ENCODE measurements at regions of chr1 and their contacts with region 1.

Region 1: GRCh38 chr1:183023601-183024316 is 539 bp downstream of the LAMC1 start:
- DNase-seq: peak; percentile 67
- ATAC-seq: peak; percentile 65
- H3K4me3 Mint-ChIP-seq: peak overlapping the region; percentile 94
- H3K27ac Mint-ChIP-seq: peak overlapping the region; percentile 86
- H3K4me1 Mint-ChIP-seq: peaks cover 48% of the 10 kb centered on the region
- H3K27me3 Mint-ChIP-seq: no peaks in the 10 kb centered on the region
- CTCF ChIP-seq: no peak

Region 2: DNA sequence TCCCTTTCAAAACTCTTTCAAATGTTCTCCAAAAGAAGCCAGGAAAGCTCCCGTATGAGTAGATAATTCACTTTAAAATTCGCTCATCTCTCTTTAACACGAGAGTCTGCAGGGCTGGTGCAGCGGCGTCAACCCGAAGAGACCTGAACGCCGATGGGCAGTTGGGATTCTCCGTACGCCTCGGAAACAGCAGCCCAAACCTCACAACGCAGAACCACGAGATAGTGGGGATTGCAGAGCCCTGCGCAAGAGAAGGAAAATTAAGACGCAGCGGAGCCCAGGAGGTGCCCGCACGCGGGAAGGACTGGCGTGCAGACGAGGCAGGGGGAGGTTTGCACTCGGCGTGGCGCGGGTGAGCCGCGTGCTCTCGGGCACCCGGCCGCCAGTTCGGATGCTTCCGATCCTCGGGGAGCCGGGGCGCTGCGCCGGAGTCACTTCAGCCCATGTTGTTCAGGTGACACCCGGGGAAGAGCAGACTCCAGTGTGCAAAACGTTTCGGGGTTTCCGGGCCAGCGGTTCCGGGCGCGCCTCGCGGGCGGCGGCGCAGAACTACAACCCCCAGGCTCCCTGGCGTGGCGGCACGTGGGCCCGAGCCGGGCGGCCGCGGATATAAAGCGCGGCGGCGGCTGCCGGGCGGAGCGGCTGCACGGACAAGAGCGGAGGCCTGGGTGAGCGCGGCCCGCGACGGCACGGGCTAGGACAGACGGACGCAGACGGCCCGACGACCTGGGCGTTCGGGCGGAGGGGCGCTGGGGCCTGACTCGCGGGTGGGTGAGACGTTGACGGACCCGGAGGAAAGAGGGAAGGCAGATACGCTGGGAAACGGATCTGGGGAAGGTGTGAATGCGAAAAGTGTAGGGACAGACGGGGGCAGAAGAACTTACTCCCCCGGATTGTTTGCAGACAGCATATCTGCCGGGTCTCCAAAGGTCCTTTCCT is 234.4 kb before region 1 on chr1 and contains the start of gene NPL:
- CTCF ChIA-PET with region 1: no interaction called
- POLR2A ChIA-PET with region 1: no interaction called
- intact Hi-C with region 1: loop called (anchors 1 kb)
- DNase-seq: peak; percentile 78
- ATAC-seq: peak; percentile 94
- H3K4me3 Mint-ChIP-seq: peak within 1 kb of the TSS; percentile 93
- H3K27ac Mint-ChIP-seq: peak within 1 kb of the TSS; percentile 80
- H3K4me1 Mint-ChIP-seq: peaks cover 17% of the 10 kb centered on the region
- H3K27me3 Mint-ChIP-seq: peaks cover 3% of the 10 kb centered on the region
- CTCF ChIP-seq: no peak
- total RNA-seq, gene NPL: 1.9 and 2.9 TPM in 2 replicates

Region 3: GRCh38 chr1:182962554-182963115 is 61.1 kb before region 1 on chr1:
- CTCF ChIA-PET with region 1: interaction called, 29 read pairs
- POLR2A ChIA-PET with region 1: interaction called, 19 read pairs
- intact Hi-C with region 1: loop called (anchors 1 kb)
- DNase-seq: no peak
- ATAC-seq: peak; percentile 100
- H3K4me3 Mint-ChIP-seq: peak overlapping the region; percentile 67
- H3K27ac Mint-ChIP-seq: peak overlapping the region; percentile 76
- H3K4me1 Mint-ChIP-seq: peaks cover 8% of the 10 kb centered on the region
- H3K27me3 Mint-ChIP-seq: peaks cover 2% of the 10 kb centered on the region
- CTCF ChIP-seq: no peak

Region 4: DNA sequence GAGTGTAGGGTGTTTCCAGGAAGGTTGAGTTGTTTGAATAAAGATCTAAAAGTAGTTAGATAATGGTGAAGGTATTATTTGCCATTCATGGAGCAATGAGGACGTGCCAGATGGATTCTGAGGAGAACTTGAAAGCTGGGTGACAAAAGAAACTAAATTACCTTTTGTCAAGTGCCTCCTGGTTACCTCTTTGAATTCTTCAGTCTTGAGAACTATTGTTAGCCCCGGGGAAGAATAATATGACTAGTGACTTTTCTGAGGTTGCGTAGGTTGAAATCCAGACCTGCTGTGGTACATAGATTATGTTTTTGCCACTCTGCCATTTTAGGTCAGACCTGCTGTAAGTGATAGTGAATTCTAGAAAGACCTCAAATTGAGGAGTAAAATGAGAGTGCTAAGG is 10.9 kb after region 1 on chr1:
- CTCF ChIA-PET with region 1: interaction called, 4 read pairs
- POLR2A ChIA-PET with region 1: no interaction called
- intact Hi-C with region 1: loop called (anchors 1 kb)
- DNase-seq: no peak
- ATAC-seq: no peak
- H3K4me3 Mint-ChIP-seq: no peak overlapping the region
- H3K27ac Mint-ChIP-seq: no peak overlapping the region
- H3K4me1 Mint-ChIP-seq: peaks cover 28% of the 10 kb centered on the region
- H3K27me3 Mint-ChIP-seq: no peaks in the 10 kb centered on the region
- CTCF ChIP-seq: no peak

Region 5: GRCh38 chr1:183070923-183071618 is 47.3 kb after region 1 on chr1:
- CTCF ChIA-PET with region 1: interaction called, 3 read pairs
- POLR2A ChIA-PET with region 1: interaction called, 3 read pairs
- intact Hi-C with region 1: loop called (anchors 1 kb)
- DNase-seq: no peak
- ATAC-seq: peak; percentile 67
- H3K4me3 Mint-ChIP-seq: peak overlapping the region; percentile 50
- H3K27ac Mint-ChIP-seq: no peak overlapping the region
- H3K4me1 Mint-ChIP-seq: peaks cover 33% of the 10 kb centered on the region
- H3K27me3 Mint-ChIP-seq: peaks cover 6% of the 10 kb centered on the region
- CTCF ChIP-seq: no peak

Region 6: GRCh38 chr1:183432548-183432875 is 408.8 kb after region 1 on chr1:
- CTCF ChIA-PET with region 1: no interaction called
- POLR2A ChIA-PET with region 1: no interaction called
- intact Hi-C with region 1: no loop called
- DNase-seq: no peak
- ATAC-seq: no peak
- H3K4me3 Mint-ChIP-seq: no peak overlapping the region
- H3K27ac Mint-ChIP-seq: no peak overlapping the region
- H3K4me1 Mint-ChIP-seq: no peaks in the 10 kb centered on the region
- H3K27me3 Mint-ChIP-seq: peaks cover 31% of the 10 kb centered on the region
- CTCF ChIP-seq: no peak

Region 7: GRCh38 chr1:183635606-183636333 is 612.0 kb after region 1 on chr1 and contains the start of gene ARPC5:
- CTCF ChIA-PET with region 1: no interaction called
- POLR2A ChIA-PET with region 1: no interaction called
- intact Hi-C with region 1: loop called (anchors 2 kb)
- DNase-seq: peak; percentile 95
- ATAC-seq: peak; percentile 89
- H3K4me3 Mint-ChIP-seq: peak within 1 kb of the TSS; percentile 100
- H3K27ac Mint-ChIP-seq: peak within 1 kb of the TSS; percentile 100
- H3K4me1 Mint-ChIP-seq: peaks cover 46% of the 10 kb centered on the region
- H3K27me3 Mint-ChIP-seq: no peaks in the 10 kb centered on the region
- CTCF ChIP-seq: no peak
- total RNA-seq, gene ARPC5: 193 and 224 TPM in 2 replicates